Naive thymus-derived CD4-positive, alpha-beta T cell (primary cell): ENCODE measurements at regions of chr2 and their contacts with region 1.

Region 1: DNA sequence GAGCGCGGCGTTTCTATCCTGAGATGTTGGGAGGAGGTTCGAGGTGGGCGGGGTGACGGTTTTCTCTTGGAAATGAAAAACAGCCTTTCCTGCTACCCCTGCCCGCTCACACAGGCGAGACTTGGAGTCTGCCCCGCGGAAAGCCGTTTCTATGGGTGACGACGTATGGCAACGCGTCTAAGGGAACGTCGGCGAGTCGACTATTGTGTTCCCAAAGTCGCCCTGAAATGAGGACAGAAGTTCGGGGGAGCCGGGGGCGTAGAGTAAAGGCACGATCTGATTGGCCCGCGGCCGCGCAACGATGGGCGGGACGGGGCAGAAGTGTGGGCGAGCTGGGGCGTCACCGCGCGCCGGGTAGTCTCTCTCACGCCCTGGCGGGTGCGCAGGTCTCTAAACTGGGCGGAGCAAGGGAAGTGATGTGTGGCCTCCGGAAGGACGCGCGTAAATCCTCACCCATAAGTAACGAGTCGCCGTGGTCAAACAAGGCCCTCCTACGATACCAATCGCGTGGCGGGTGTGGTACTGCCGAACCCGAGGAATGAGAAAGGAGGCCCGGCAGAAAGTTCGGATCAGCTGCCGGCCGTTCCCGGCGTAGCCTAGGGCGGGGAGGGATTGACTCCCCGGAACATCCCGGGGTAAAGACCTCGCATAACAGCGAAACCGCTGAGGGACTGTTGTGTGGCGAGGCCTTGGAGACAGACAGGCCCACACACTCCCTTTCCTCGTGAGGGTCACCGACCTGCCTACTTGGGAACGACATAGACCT is 89.6 kb downstream of the FAM161A start:
- DNase-seq: peak; percentile 89 to 98 (median 97)
- ATAC-seq: peak; percentile 99
- H3K4me3 ChIP-seq: peak overlapping the region; percentile 71
- H3K4me3 Mint-ChIP-seq: peak overlapping the region; percentile 80 to 98 (median 95)
- H3K27ac ChIP-seq: peak overlapping the region; percentile 93
- H3K27ac Mint-ChIP-seq: peak overlapping the region; percentile 94 to 99 (median 98)
- H3K4me1 ChIP-seq: peaks cover 6 to 9% of the 10 kb centered on the region in 2 donors
- H3K4me1 Mint-ChIP-seq: peaks cover 0 to 16% (median 10%) of the 10 kb centered on the region in 7 donors
- H3K27me3 ChIP-seq: no peaks in the 10 kb centered on the region
- H3K27me3 Mint-ChIP-seq: peaks cover 0 to under 1% (median 0%) of the 10 kb centered on the region in 5 donors

Region 2: GRCh38 chr2:60756191-60757041 is 1007.8 kb before region 1 on chr2 and contains the start of gene PAPOLG:
- CTCF ChIA-PET with region 1: no interaction called
- POLR2A ChIA-PET with region 1: interaction called, 4 read pairs
- intact Hi-C with region 1: loop called (anchors 1 to 10 kb)
- DNase-seq: peak; percentile 90 to 97 (median 93)
- ATAC-seq: peak; percentile 100
- H3K4me3 ChIP-seq: peak within 1 kb of the TSS; percentile 86
- H3K4me3 Mint-ChIP-seq: peak within 1 kb of the TSS; percentile 94 to 100 (median 98)
- H3K27ac ChIP-seq: peak within 1 kb of the TSS; percentile 85
- H3K27ac Mint-ChIP-seq: peak within 1 kb of the TSS; percentile 94 to 100 (median 98)
- H3K4me1 ChIP-seq: peaks cover 0 to 13% of the 10 kb centered on the region in 2 donors
- H3K4me1 Mint-ChIP-seq: peaks cover 24 to 53% (median 46%) of the 10 kb centered on the region in 7 donors
- H3K27me3 ChIP-seq: no peaks in the 10 kb centered on the region
- H3K27me3 Mint-ChIP-seq: no peaks in the 10 kb centered on the region
- total RNA-seq, gene PAPOLG: 15.1 to 42.4 (median 22.9) TPM

Region 3: DNA sequence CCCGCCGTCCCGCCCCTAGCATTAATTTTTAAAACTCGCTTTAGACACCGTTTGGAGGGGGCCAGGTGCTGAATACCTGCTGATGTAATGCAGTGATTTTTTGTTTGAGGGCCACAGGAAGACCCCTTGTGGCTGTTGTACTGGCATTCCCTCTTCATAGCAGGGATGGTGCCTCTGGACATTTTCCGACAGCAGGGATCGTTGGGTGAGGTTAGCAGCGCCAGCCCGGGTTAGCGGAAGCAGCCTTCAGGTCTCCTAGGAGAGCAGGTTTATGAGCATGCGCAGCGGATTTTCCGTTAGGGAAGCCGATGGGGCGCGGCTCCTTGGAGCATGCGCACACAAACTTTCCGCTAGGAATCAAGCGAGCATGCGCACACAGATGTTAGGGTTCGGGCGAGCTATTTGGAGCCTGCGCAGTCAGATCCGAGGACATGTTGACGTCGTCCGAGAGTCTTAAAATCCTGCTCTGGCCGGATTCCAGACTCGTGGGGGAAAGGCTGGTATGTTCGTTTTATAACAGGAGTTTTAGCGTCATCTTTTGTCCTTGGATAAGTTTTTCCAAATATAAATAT is 619.4 kb before region 1 on chr2:
- CTCF ChIA-PET with region 1: no interaction called
- POLR2A ChIA-PET with region 1: no interaction called
- intact Hi-C with region 1: loop called (anchors 1 to 10 kb)
- DNase-seq: peak; percentile 74 to 90 (median 86)
- ATAC-seq: peak; percentile 92
- H3K4me3 ChIP-seq: peak overlapping the region; percentile 82
- H3K4me3 Mint-ChIP-seq: peak overlapping the region; percentile 88 to 98 (median 94)
- H3K27ac ChIP-seq: peak overlapping the region; percentile 73
- H3K27ac Mint-ChIP-seq: peak overlapping the region; percentile 90 to 98 (median 95)
- H3K4me1 ChIP-seq: peaks cover 4 to 5% of the 10 kb centered on the region in 2 donors
- H3K4me1 Mint-ChIP-seq: peaks cover 0 to 18% (median 7%) of the 10 kb centered on the region in 7 donors
- H3K27me3 ChIP-seq: no peaks in the 10 kb centered on the region
- H3K27me3 Mint-ChIP-seq: peaks cover 0 to 2% (median 0%) of the 10 kb centered on the region in 5 donors

Region 4: GRCh38 chr2:61670591-61671501 is 93.4 kb before region 1 on chr2:
- CTCF ChIA-PET with region 1: no interaction called
- POLR2A ChIA-PET with region 1: interaction called, 4 read pairs
- intact Hi-C with region 1: loop called in 1 of 2 experiments (anchors 2 kb)
- DNase-seq: peak in 2 of 9 donors; percentile 3 to 13
- ATAC-seq: peak; percentile 36
- H3K4me3 ChIP-seq: peak overlapping the region; percentile 29
- H3K4me3 Mint-ChIP-seq: peak overlapping the region; percentile 2 to 88 (median 70)
- H3K27ac ChIP-seq: peak overlapping the region; percentile 52
- H3K27ac Mint-ChIP-seq: peak overlapping the region; percentile 26 to 95 (median 74)
- H3K4me1 ChIP-seq: peaks cover 3 to 10% of the 10 kb centered on the region in 2 donors
- H3K4me1 Mint-ChIP-seq: peaks cover 9 to 20% (median 18%) of the 10 kb centered on the region in 7 donors
- H3K27me3 ChIP-seq: no peaks in the 10 kb centered on the region
- H3K27me3 Mint-ChIP-seq: no peaks in the 10 kb centered on the region

Region 5: DNA sequence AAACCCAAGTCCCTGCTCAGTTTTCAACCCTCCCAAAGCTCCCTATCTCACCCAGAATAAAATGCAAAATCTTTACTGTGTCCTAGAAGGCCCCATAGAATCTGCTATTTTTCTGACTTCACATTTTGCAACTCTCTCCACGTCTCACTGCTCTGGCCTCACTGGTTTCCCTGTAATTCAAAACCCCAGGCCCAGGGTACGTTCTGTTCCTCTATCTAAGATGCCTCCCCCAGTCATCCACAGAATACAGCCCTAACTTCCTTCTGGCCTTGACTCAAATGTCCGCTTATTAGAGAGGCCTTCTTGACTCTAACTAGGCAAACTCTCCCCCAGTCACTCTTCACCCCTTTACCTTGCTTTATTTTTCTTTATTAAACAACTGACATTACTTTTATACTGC is 47.6 kb after region 1 on chr2:
- CTCF ChIA-PET with region 1: no interaction called
- POLR2A ChIA-PET with region 1: no interaction called
- intact Hi-C with region 1: no loop called
- DNase-seq: no peak
- ATAC-seq: no peak
- H3K4me3 ChIP-seq: no peak overlapping the region
- H3K4me3 Mint-ChIP-seq: no peak overlapping the region
- H3K27ac ChIP-seq: no peak overlapping the region
- H3K27ac Mint-ChIP-seq: no peak overlapping the region
- H3K4me1 ChIP-seq: no peaks in the 10 kb centered on the region
- H3K4me1 Mint-ChIP-seq: peaks cover 0 to 4% (median 0%) of the 10 kb centered on the region in 7 donors
- H3K27me3 ChIP-seq: no peaks in the 10 kb centered on the region
- H3K27me3 Mint-ChIP-seq: peaks cover 8 to 17% (median 9%) of the 10 kb centered on the region in 5 donors

Region 6: DNA sequence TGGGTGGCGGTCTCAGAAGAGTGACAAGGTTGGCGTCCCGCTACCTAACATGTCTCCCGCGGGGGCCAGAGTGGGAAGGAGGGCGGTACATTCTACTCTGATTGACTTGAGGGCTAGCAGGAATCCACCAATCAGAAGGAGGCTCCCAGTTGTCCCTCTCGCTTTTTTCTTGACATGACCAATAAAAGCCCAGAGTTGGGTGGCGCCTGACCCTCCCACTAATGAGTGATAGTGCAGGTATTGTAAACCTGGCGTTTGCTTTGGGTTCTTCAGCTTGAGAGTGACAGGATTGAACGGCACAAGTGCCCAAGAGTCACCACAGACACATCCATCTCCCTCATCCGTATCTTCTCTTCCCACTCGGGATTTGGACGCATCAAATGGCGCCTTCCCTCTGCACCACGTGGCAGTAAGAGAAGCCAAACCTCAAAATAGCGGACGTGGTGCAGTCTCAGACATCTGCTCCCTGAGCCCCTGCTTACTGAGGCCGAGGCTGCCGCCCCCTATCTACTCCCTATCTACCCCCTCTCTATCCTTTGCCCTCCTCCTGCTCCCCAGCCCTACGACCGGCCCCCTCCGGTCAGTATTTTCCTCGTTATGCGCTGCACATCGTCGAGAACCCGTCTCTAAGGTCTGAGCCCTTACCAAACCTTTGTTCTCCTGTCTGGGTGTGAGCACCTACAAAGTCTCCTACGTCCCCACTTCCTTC is 90.4 kb after region 1 on chr2:
- CTCF ChIA-PET with region 1: no interaction called
- POLR2A ChIA-PET with region 1: interaction called, 4 read pairs
- intact Hi-C with region 1: loop called (anchors 1 kb)
- DNase-seq: peak; percentile 61 to 96 (median 94)
- ATAC-seq: peak; percentile 95
- H3K4me3 ChIP-seq: peak overlapping the region; percentile 100
- H3K4me3 Mint-ChIP-seq: peak overlapping the region; percentile 92 to 99 (median 96)
- H3K27ac ChIP-seq: peak overlapping the region; percentile 77
- H3K27ac Mint-ChIP-seq: peak overlapping the region; percentile 90 to 98 (median 95)
- H3K4me1 ChIP-seq: peaks cover 4 to 6% of the 10 kb centered on the region in 2 donors
- H3K4me1 Mint-ChIP-seq: peaks cover 10 to 27% (median 17%) of the 10 kb centered on the region in 7 donors
- H3K27me3 ChIP-seq: no peaks in the 10 kb centered on the region
- H3K27me3 Mint-ChIP-seq: no peaks in the 10 kb centered on the region

Region 7: DNA sequence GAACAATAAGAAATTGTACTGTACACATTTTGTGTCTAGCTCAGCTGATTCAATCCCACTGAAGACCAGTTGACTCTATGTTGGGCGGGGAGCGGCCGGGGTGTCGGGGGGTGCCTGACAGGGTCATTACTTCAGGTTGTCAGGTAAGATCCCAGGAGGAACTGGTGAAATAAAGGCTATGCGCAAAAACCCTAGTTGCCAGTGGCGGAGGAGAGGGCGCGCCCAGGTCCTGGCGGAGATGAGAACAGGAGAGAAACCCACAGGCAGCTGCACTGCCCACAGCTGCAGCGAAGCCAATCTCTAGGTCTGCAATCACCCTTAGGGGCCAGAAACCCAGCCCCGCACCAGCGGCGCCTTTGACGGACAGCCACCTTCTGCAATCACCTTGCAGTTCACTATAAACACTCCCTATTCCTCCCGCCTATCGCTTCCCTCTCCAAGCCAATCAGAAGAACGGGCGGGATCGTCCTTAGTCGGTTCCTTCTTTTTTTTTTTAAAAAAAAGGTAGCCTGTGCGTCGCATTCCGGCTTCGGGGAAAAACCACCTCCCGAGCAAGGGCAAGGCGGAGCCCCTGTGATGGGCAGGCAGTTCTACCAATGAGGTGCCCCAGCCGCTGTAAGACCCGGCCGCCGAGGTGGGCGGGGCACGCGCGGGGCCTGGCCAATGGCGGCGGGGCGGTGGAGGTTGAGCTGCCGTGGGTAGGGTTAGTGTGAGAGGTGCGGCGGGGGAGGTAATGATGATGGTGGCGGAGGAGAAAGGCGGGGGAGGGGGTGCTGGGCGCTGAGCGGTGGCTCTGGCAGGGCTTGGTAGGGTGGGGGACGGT is 941.0 kb after region 1 on chr2 and contains the start of gene EHBP1:
- CTCF ChIA-PET with region 1: no interaction called
- POLR2A ChIA-PET with region 1: no interaction called
- intact Hi-C with region 1: loop called in 1 of 2 experiments (anchors 1 kb)
- DNase-seq: peak; percentile 95 to 99 (median 98)
- ATAC-seq: peak; percentile 98
- H3K4me3 ChIP-seq: peak within 1 kb of the TSS; percentile 82
- H3K4me3 Mint-ChIP-seq: peak within 1 kb of the TSS; percentile 83 to 98 (median 92)
- H3K27ac ChIP-seq: peak within 1 kb of the TSS; percentile 72
- H3K27ac Mint-ChIP-seq: peak within 1 kb of the TSS; percentile 76 to 93 (median 84)
- H3K4me1 ChIP-seq: peaks cover 0 to 25% of the 10 kb centered on the region in 2 donors
- H3K4me1 Mint-ChIP-seq: peaks cover 24 to 48% (median 31%) of the 10 kb centered on the region in 7 donors
- H3K27me3 ChIP-seq: no peaks in the 10 kb centered on the region
- H3K27me3 Mint-ChIP-seq: peaks cover 0 to 13% (median 0%) of the 10 kb centered on the region in 5 donors
- total RNA-seq, gene EHBP1: 23.8 to 31.5 (median 30.0) TPM